Activated CD8-positive, alpha-beta T cell treated with anti-CD3 and anti-CD28 coated beads, Interleukin-2, amount 10 ng/mL, durations not matched to agents 7 days and 5 days (primary cell): ENCODE measurements at regions of chr12 and their contacts with region 1.

Region 1: DNA sequence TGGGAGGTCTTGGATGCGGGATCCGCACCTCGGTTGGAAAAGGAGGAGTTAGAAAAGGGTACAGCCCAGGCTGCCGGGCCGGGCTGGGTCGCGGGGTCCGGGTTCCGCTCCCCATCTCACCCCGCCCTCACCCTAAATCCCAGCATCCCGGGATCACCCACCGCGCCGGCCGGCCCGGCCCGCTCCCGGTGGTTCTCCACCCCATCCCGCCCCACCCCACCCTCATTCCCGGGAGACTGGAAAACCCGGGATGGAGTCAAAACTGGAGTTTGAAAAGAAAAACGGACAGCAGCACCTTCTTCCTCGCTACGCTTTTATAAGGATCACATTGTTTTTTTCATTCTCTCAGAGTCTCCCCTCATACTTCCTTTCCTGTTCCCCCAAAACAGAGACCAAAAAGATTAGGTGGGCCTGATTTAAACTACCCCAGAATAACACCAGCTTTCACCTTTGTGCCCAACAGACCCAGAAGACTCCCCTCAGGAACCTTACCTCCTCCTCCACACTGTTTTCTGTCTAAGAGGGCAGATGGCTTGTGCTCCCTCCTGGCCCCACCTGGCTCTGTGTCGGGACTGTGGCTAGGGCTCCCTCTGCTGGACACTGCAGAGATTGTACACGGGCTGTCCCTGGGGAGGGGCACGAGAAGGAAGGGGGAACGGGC is 2.8 kb downstream of the GLI1 start:
- DNase-seq: peak; percentile 94
- ATAC-seq: peak; percentile 78
- H3K4me3 Mint-ChIP-seq: peak overlapping the region; percentile 83
- H3K27ac Mint-ChIP-seq: peak overlapping the region; percentile 80
- H3K4me1 Mint-ChIP-seq: peaks cover 63% of the 10 kb centered on the region
- H3K27me3 Mint-ChIP-seq: peaks cover 9% of the 10 kb centered on the region

Region 2: DNA sequence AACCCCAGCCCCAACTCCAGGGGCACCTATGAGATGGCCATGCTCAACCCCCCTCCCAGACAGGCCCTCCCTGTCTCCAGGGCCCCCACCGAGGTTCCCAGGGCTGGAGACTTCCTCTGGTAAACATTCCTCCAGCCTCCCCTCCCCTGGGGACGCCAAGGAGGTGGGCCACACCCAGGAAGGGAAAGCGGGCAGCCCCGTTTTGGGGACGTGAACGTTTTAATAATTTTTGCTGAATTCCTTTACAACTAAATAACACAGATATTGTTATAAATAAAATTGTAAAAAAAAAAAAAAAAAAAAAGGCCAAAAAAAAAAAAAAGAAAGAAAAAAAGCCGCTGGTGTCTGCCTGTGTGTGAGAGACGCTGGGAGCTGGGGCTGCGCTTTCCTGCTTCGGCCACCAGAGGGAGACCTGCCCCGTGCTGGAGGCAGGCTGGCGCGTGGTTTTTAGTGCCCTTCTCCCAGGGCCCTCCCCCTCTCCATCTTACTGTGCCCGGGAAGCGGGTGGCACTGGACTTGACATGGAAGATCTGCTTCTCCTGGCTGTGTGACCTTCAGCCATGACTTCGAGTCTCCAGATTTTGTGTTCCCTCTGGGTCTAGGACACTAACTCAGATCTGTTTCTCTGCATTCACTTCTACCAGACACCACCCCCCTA is 249.2 kb before region 1 on chr12:
- CTCF ChIA-PET with region 1: interaction called, 11 read pairs
- POLR2A ChIA-PET with region 1: no interaction called
- DNase-seq: peak; percentile 88
- ATAC-seq: peak; percentile 61
- H3K4me3 Mint-ChIP-seq: no peak overlapping the region
- H3K27ac Mint-ChIP-seq: peak overlapping the region; percentile 66
- H3K4me1 Mint-ChIP-seq: peaks cover 35% of the 10 kb centered on the region
- H3K27me3 Mint-ChIP-seq: peaks cover 41% of the 10 kb centered on the region

Region 3: DNA sequence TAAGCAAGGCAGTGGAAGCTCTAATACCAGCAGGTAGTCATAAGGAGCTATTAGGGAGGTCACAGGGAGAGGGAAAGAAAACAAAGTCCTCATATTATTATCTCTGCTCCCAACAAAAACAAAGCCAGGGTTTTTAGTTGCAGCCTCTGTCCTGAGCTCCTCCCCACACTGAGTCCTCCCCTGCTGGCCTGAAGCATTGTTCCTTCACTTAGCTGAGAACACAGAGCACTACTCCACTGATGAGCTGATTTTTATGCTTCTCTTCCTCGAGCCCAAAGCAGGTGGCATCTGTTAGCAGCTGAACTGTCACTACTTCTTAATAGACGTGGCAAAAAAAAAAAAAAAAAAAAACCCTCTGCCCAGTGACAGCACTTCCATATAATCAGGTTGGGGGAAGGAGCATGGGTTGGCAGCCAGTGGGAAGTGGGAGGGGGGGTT is 200.9 kb before region 1 on chr12:
- CTCF ChIA-PET with region 1: interaction called, 17 read pairs
- POLR2A ChIA-PET with region 1: no interaction called
- DNase-seq: no peak
- ATAC-seq: no peak
- H3K4me3 Mint-ChIP-seq: no peak overlapping the region
- H3K27ac Mint-ChIP-seq: no peak overlapping the region
- H3K4me1 Mint-ChIP-seq: peaks cover 8% of the 10 kb centered on the region
- H3K27me3 Mint-ChIP-seq: no peaks in the 10 kb centered on the region

Region 4: DNA sequence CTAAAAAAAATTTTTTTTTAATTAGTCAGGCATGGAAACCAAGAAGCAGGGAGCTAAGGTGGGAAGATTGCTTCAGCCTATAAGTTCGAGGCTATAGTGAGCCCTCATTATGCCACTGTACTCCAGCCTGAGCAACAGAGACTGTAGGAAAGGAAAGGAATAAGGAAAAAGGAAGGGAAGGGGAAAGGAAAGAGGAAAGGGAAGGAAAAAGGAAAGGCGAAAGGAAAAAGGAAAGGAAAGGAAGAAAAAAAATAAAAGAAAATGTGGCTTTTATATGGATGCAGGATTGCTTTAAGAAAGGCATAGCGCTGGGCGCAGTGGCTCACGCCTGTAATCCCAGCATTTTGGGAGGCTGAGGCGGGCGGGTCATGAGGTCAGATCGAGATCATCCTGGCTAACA is 101.9 kb before region 1 on chr12:
- CTCF ChIA-PET with region 1: no interaction called
- POLR2A ChIA-PET with region 1: no interaction called
- DNase-seq: no peak
- ATAC-seq: no peak
- H3K4me3 Mint-ChIP-seq: no peak overlapping the region
- H3K27ac Mint-ChIP-seq: no peak overlapping the region
- H3K4me1 Mint-ChIP-seq: no peaks in the 10 kb centered on the region
- H3K27me3 Mint-ChIP-seq: no peaks in the 10 kb centered on the region

Region 5: GRCh38 chr12:57430112-57430930 is 32.1 kb before region 1 on chr12:
- CTCF ChIA-PET with region 1: interaction called, 14 read pairs
- POLR2A ChIA-PET with region 1: interaction called, 12 read pairs
- DNase-seq: peak; percentile 57
- ATAC-seq: peak; percentile 64
- H3K4me3 Mint-ChIP-seq: peak overlapping the region; percentile 97
- H3K27ac Mint-ChIP-seq: peak overlapping the region; percentile 98
- H3K4me1 Mint-ChIP-seq: peaks cover 42% of the 10 kb centered on the region
- H3K27me3 Mint-ChIP-seq: no peaks in the 10 kb centered on the region

Region 6: GRCh38 chr12:57476162-57476992 is 14.0 kb after region 1 on chr12:
- CTCF ChIA-PET with region 1: interaction called, 57 read pairs
- POLR2A ChIA-PET with region 1: interaction called, 74 read pairs
- DNase-seq: peak; percentile 79
- ATAC-seq: peak; percentile 13
- H3K4me3 Mint-ChIP-seq: peak overlapping the region; percentile 96
- H3K27ac Mint-ChIP-seq: peak overlapping the region; percentile 99
- H3K4me1 Mint-ChIP-seq: peaks cover 79% of the 10 kb centered on the region
- H3K27me3 Mint-ChIP-seq: no peaks in the 10 kb centered on the region

Region 7: GRCh38 chr12:57539134-57539768 is 76.9 kb after region 1 on chr12:
- CTCF ChIA-PET with region 1: interaction called, 12 read pairs
- POLR2A ChIA-PET with region 1: no interaction called
- DNase-seq: no peak
- ATAC-seq: no peak
- H3K4me3 Mint-ChIP-seq: no peak overlapping the region
- H3K27ac Mint-ChIP-seq: peak overlapping the region; percentile 22
- H3K4me1 Mint-ChIP-seq: peaks cover 13% of the 10 kb centered on the region
- H3K27me3 Mint-ChIP-seq: no peaks in the 10 kb centered on the region

Region 8: DNA sequence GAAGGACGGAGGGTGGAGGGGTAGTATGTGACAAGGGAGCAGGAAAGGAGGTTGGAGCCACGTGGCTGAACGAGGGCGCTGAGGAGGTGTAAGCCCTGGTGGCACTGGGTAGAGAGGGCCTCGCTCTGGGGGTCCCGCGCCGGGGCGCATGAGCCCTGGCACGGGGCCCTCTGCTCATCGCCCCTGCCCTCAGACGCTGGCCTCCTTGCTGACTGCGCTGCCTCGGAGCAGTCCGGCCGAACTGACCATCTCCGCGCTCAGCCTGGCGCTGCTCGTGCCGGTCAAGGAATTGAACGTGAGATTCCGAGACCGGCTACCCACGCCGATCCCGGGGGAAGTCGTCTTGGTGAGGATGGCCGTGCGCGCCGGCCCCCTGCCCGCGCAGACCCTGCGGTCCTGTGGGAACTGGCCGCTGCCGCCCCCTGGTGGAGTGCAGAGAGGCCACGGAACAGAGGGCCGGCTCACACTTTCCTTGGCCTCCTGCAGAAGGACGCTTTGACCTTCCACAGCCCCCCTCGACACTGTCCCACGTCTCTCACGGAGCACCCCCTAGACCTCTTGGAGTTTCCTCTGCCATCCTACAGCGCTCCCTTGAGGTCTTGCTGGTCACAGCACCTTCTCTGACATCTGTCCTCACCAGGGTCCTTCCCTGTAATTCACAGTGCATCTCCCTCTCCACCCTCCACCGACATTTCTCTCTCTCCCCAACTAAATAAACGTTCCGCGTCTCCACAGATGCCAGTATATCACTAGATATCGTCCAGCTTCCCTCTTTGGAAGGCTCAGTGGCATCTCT is 159.3 kb after region 1 on chr12:
- CTCF ChIA-PET with region 1: interaction called, 10 read pairs
- POLR2A ChIA-PET with region 1: no interaction called
- DNase-seq: peak; percentile 64
- ATAC-seq: peak; percentile 77
- H3K4me3 Mint-ChIP-seq: peak overlapping the region; percentile 63
- H3K27ac Mint-ChIP-seq: no peak overlapping the region
- H3K4me1 Mint-ChIP-seq: peaks cover 30% of the 10 kb centered on the region
- H3K27me3 Mint-ChIP-seq: peaks cover 94% of the 10 kb centered on the region